ENCODE measurements at regions of chr13 and their contacts with region 1.

Region 1: GRCh38 chr13:77033717-77034302 is 6.9 kb upstream of the FBXL3 start:
- DNase-seq: no peak
- ATAC-seq: no peak

Region 2: DNA sequence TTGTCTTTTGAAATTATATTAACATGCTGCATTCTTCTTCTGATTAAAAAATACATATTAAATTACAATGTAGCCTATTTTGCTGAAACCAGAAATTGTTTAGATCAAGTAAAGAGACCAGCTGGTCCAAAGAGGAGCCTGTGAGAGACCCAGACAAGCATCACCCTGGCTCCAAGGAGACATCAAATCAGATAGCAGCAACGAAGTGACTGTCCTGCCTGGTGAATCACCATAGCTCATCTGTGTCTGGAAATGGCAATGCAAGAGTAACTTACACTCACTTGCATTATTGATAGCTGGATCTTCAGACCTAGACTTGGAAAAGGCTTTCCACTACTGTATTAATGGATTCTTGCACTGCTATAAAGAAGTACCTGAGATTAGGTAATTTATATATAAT is 316.7 kb before region 1 on chr13:
- intact Hi-C with region 1: no loop called
- DNase-seq: no peak
- ATAC-seq: no peak

Region 3: GRCh38 chr13:76965759-76966421 is 67.9 kb before region 1 on chr13:
- intact Hi-C with region 1: no loop called
- DNase-seq: peak; percentile 89
- ATAC-seq: peak; percentile 85

Region 4: GRCh38 chr13:76991796-76992547 is 41.8 kb before region 1 on chr13 and contains the start of gene CLN5:
- intact Hi-C with region 1: loop called (anchors 2 kb)
- DNase-seq: peak; percentile 95
- ATAC-seq: peak; percentile 97
- total RNA-seq, gene CLN5: 46.5 TPM

Region 5: GRCh38 chr13:77113496-77113895 is 79.7 kb after region 1 on chr13:
- intact Hi-C with region 1: no loop called
- DNase-seq: no peak
- ATAC-seq: peak; percentile 62

Region 6: GRCh38 chr13:77599351-77599750 is 565.5 kb after region 1 on chr13:
- intact Hi-C with region 1: no loop called
- DNase-seq: no peak
- ATAC-seq: no peak

Measured in sciatic nerve (tissue), 2 donors.